Calu3 (cell line): ENCODE measurements at regions of chr3 and their contacts with region 1.

Region 1: GRCh38 chr3:127768346-127769008 is 53.8 kb downstream of the MGLL start:
- DNase-seq: peak; percentile 67
- H3K4me3 Mint-ChIP-seq: peak overlapping the region; percentile 27
- H3K27ac Mint-ChIP-seq: peak overlapping the region; percentile 83
- H3K4me1 Mint-ChIP-seq: peaks cover 48% of the 10 kb centered on the region
- H3K27me3 Mint-ChIP-seq: no peaks in the 10 kb centered on the region
- CTCF ChIP-seq: no peak

Region 2: GRCh38 chr3:127690823-127691452 is 77.5 kb before region 1 on chr3:
- CTCF ChIA-PET with region 1: interaction called, 3 read pairs
- intact Hi-C with region 1: loop called (anchors 5 kb)
- DNase-seq: peak; percentile 81
- H3K4me3 Mint-ChIP-seq: no peak overlapping the region
- H3K27ac Mint-ChIP-seq: no peak overlapping the region
- H3K4me1 Mint-ChIP-seq: no peaks in the 10 kb centered on the region
- H3K27me3 Mint-ChIP-seq: no peaks in the 10 kb centered on the region
- CTCF ChIP-seq: peak; percentile 75

Region 3: DNA sequence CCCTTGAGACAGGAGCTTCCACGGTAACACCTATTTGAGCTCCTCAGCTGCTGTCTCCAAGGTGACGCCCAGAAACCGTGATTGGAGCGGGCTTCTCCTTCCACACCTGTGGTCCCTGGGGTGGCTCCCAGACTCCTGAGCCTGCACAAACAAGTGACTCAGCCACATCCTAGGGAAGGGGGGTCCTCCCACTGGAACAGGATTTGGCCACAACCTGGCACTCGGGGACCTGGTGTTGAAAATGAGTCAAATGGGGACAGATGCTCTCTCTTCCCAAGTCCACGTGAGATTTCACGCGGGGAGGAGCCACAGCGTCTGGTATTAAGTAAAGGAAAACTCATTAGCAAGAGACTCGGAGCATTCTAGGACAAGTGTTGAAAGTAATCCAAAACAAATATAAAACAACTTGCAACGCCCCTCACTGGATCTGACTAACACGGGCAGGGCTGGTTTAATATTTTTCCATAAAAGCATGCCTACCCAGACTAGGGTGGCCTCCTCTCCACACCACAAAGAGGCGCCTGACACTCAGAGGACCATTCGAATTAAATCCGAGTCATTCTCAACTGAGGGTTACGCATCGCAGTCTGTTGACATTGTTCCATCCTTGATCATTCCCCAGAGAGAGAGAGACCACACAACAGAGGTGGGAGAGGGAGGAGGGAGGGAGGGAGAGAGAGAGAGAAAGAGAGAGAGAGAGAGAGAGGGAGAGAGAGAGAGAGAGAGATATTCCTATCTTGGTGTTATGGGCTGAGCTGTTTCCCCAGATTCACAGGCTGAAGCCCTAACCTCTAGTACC is 20.6 kb before region 1 on chr3:
- CTCF ChIA-PET with region 1: interaction called, 7 read pairs
- intact Hi-C with region 1: loop called (anchors 1 kb)
- DNase-seq: peak; percentile 80
- H3K4me3 Mint-ChIP-seq: peak overlapping the region; percentile 29
- H3K27ac Mint-ChIP-seq: peak overlapping the region; percentile 83
- H3K4me1 Mint-ChIP-seq: peaks cover 62% of the 10 kb centered on the region
- H3K27me3 Mint-ChIP-seq: no peaks in the 10 kb centered on the region
- CTCF ChIP-seq: no peak

Region 4: DNA sequence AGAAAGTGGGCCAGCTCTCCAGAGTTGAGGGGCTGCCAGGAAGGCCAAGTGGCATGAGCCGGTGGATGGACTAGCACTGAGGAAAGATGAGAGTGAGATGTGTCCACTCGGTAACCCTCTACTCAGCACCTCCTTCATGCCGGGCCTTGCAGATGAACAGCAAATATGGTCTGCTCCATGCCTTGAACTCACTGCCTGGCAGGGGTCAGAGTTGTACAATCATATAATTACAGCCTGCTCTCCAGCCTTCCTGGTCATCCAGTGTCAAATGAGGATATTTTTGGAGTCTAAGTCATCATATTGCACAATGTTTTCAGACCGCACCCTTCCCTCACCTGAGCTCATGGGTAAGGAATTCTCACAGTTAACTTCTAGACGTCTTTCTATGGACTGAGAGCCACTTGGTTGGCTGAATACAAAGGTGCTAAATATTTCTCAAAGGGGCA is 48.9 kb after region 1 on chr3:
- CTCF ChIA-PET with region 1: no interaction called
- intact Hi-C with region 1: loop called (anchors 1 kb)
- DNase-seq: peak; percentile 77
- H3K4me3 Mint-ChIP-seq: peak overlapping the region; percentile 39
- H3K27ac Mint-ChIP-seq: peak overlapping the region; percentile 84
- H3K4me1 Mint-ChIP-seq: peaks cover 83% of the 10 kb centered on the region
- H3K27me3 Mint-ChIP-seq: no peaks in the 10 kb centered on the region
- CTCF ChIP-seq: no peak

Region 5: GRCh38 chr3:127822698-127823425 is 54.4 kb after region 1 on chr3:
- CTCF ChIA-PET with region 1: interaction called, 4 read pairs
- intact Hi-C with region 1: loop called (anchors 1 kb)
- DNase-seq: peak; percentile 52
- H3K4me3 Mint-ChIP-seq: peak overlapping the region; percentile 85
- H3K27ac Mint-ChIP-seq: peak overlapping the region; percentile 94
- H3K4me1 Mint-ChIP-seq: peaks cover 62% of the 10 kb centered on the region
- H3K27me3 Mint-ChIP-seq: peaks cover 13% of the 10 kb centered on the region
- CTCF ChIP-seq: no peak

Region 6: DNA sequence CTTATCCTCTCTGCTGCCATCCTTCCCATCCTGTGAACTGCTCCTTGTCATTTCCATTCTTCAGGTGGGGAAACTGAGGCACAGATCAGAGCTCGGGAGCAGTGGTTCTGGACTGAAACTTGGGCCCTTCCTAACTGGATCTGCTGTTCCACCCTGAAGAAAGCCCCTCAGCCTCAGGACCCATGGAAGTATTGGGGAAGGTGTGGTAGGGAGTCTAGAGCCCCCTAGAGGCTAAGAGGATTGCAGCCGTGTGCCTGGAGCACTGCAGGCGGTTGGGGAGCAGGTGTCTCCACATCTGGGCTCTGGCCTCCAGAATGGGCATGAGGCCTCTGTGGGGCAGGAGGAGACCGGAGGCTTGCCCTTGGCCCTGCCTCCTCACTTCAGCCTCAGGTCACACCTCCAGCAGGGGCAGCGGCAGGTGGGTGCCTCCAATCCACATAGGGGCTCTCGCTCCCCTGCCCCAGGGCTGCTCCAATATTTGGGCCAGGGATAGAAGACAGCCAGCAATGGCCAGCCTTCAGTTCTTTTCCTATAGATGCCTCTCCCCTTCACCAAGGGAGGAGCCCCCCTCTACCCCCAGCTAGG is 670.1 kb after region 1 on chr3:
- CTCF ChIA-PET with region 1: no interaction called
- intact Hi-C with region 1: no loop called
- DNase-seq: no peak
- H3K4me3 Mint-ChIP-seq: no peak overlapping the region
- H3K27ac Mint-ChIP-seq: no peak overlapping the region
- H3K4me1 Mint-ChIP-seq: peaks cover 12% of the 10 kb centered on the region
- H3K27me3 Mint-ChIP-seq: peaks cover 49% of the 10 kb centered on the region
- CTCF ChIP-seq: peak; percentile 53